Transverse colon (tissue), 4 donors: ENCODE measurements at regions of chr14 and their contacts with region 1.

Region 1: DNA sequence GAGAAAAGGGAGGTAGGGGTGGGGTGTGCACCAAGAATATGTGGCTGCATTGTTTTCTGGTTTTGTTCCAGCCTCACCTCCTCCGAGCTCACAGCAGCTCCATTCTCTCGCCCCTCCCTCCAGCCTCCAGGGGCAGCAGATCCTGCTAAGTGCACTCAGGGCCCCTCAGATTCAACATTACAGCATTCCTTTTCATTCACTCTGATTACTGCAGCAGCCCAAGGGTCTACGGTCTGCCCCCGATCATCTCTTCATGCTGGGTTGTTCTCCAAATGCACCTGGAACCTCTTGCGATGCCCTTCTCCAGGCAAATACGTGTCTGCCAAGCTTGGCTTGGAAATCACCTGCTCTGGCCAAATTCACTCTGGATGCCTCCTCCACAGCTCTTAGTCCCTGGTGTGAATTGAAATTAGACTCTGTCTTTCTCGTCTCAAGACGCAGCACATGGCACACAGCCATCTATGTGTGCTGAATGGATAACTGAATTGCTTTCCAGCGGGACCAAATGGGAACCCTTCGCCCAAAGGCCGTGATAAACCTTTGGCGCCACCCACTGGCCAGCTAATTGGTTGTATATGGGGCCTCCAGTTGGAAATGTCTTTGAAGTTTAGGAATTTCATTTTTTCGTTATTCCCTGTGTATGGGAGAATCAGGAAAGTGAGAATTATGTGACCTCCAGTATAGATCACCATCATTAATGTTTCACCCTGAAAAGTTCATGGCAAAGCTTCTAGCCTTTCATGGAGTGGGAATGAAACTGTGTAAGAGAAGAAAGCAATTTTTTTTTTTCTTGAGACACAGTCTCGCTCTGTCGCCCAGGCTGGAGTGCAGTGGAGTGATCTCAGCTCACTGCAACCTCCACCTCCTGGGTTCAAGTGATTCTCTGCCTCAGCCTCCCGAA is 9.6 kb upstream of the HSP90AA1 start:
- DNase-seq: peak; percentile 89
- H3K4me3 ChIP-seq: no peak overlapping the region
- H3K27ac ChIP-seq: no peak overlapping the region
- H3K4me1 ChIP-seq: peaks cover 0 to 19% (median 8%) of the 10 kb centered on the region in 4 donors
- H3K27me3 ChIP-seq: no peaks in the 10 kb centered on the region
- CTCF ChIP-seq: peak; percentile 77 to 83 (median 79)
- EP300 ChIP-seq: no peak
- POLR2A ChIP-seq: no peak

Region 2: GRCh38 chr14:101707068-101707842 is 389.2 kb before region 1 on chr14:
- in situ Hi-C with region 1: loop called in 1 of 4 experiments (anchors 10 kb)
- intact Hi-C with region 1: no loop called
- DNase-seq: peak; percentile 58
- H3K4me3 ChIP-seq: no peak overlapping the region
- H3K27ac ChIP-seq: peak overlapping the region; percentile 68 to 73 (median 68)
- H3K4me1 ChIP-seq: peaks cover 6 to 26% (median 16%) of the 10 kb centered on the region in 4 donors
- H3K27me3 ChIP-seq: peaks cover 4% of the 10 kb centered on the region
- CTCF ChIP-seq: peak; percentile 87 to 95 (median 89)
- EP300 ChIP-seq: no peak
- POLR2A ChIP-seq: no peak

Region 3: DNA sequence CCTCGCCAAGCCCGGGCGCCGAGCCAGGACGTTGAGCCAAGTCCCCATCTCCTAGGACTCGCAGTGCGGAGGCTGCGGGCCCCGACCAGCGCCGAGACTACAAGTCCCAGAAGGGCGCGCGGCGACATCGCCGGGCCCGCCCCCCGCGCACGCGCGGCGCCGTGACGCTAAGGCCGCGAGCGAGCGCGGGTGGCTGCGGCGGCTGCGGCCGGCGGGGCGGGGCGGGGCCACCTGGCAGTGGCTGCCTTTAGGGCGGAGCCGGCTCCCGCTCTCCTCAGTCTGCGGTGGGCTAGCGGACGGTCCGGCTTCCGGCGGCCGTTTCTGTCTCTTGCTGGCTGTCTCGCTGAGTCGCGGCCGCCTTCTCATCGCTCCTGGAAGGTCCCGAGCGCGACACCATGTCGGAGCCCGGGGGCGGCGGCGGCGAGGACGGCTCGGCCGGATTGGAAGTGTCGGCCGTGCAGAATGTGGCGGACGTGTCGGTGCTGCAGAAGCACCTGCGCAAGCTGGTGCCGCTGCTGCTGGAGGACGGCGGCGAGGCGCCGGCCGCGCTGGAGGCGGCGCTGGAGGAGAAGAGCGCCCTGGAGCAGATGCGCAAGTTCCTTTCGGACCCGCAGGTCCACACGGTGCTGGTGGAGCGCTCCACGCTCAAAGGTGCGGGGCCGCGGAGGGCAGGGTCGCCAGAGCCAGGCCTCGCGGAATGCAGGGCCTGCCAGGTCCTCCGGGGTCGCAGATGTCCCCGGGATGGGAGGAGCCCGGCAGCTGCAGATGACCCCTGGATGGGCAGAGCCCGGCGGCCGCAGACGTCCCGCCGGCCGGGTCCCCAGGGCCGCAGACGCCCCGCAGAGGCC is 131.9 kb before region 1 on chr14 and contains the start of gene DYNC1H1:
- in situ Hi-C with region 1: loop called in 1 of 4 experiments (anchors 10 kb)
- intact Hi-C with region 1: no loop called
- DNase-seq: peak; percentile 92
- H3K4me3 ChIP-seq: peak within 1 kb of the TSS; percentile 87 to 99 (median 94)
- H3K27ac ChIP-seq: peak within 1 kb of the TSS; percentile 96 to 99 (median 98)
- H3K4me1 ChIP-seq: peaks cover 8 to 51% (median 29%) of the 10 kb centered on the region in 4 donors
- H3K27me3 ChIP-seq: no peaks in the 10 kb centered on the region
- CTCF ChIP-seq: no peak
- EP300 ChIP-seq: no peak
- POLR2A ChIP-seq: peak; percentile 97
- total RNA-seq, gene DYNC1H1: 471 to 647 (median 482) TPM

Region 4: GRCh38 chr14:102046343-102047278 is 49.9 kb before region 1 on chr14:
- in situ Hi-C with region 1: no loop called
- intact Hi-C with region 1: no loop called
- DNase-seq: peak; percentile 90
- H3K4me3 ChIP-seq: no peak overlapping the region
- H3K27ac ChIP-seq: peak overlapping the region; percentile 24 to 66 (median 54)
- H3K4me1 ChIP-seq: peaks cover 0 to 14% (median 3%) of the 10 kb centered on the region in 4 donors
- H3K27me3 ChIP-seq: no peaks in the 10 kb centered on the region
- CTCF ChIP-seq: peak; percentile 38 to 77 (median 59)
- EP300 ChIP-seq: no peak
- POLR2A ChIP-seq: no peak

Region 5: GRCh38 chr14:102125546-102125945 is 29.1 kb after region 1 on chr14:
- in situ Hi-C with region 1: no loop called
- intact Hi-C with region 1: loop called (anchors 1 kb)
- DNase-seq: no peak
- H3K4me3 ChIP-seq: no peak overlapping the region
- H3K27ac ChIP-seq: peak overlapping the region in 2 of 4 donors; percentile 17 to 38
- H3K4me1 ChIP-seq: peaks cover 0 to 22% (median 8%) of the 10 kb centered on the region in 4 donors
- H3K27me3 ChIP-seq: no peaks in the 10 kb centered on the region
- CTCF ChIP-seq: no peak
- EP300 ChIP-seq: no peak
- POLR2A ChIP-seq: no peak